MCF 10A (cell line): ENCODE measurements at regions of chr3 and their contacts with region 1.

Region 1: GRCh38 chr3:113947372-113948014 is at the start of gene ZDHHC23:
- DNase-seq: peak; percentile 73
- H3K4me3 Mint-ChIP-seq: peak within 1 kb of the TSS; percentile 79
- H3K27ac Mint-ChIP-seq: no peak within 1 kb of the TSS
- H3K4me1 Mint-ChIP-seq: peaks cover 13% of the 10 kb centered on the region
- H3K27me3 Mint-ChIP-seq: no peaks in the 10 kb centered on the region
- CTCF ChIP-seq: no peak
- total RNA-seq, gene ZDHHC23: 7.4 TPM in 2 replicates

Region 2: GRCh38 chr3:113852506-113852905 is 95.0 kb before region 1 on chr3:
- CTCF ChIA-PET with region 1: no interaction called
- POLR2A ChIA-PET with region 1: no interaction called
- intact Hi-C with region 1: no loop called
- DNase-seq: no peak
- H3K4me3 Mint-ChIP-seq: no peak overlapping the region
- H3K27ac Mint-ChIP-seq: no peak overlapping the region
- H3K4me1 Mint-ChIP-seq: no peaks in the 10 kb centered on the region
- H3K27me3 Mint-ChIP-seq: no peaks in the 10 kb centered on the region
- CTCF ChIP-seq: no peak

Region 3: DNA sequence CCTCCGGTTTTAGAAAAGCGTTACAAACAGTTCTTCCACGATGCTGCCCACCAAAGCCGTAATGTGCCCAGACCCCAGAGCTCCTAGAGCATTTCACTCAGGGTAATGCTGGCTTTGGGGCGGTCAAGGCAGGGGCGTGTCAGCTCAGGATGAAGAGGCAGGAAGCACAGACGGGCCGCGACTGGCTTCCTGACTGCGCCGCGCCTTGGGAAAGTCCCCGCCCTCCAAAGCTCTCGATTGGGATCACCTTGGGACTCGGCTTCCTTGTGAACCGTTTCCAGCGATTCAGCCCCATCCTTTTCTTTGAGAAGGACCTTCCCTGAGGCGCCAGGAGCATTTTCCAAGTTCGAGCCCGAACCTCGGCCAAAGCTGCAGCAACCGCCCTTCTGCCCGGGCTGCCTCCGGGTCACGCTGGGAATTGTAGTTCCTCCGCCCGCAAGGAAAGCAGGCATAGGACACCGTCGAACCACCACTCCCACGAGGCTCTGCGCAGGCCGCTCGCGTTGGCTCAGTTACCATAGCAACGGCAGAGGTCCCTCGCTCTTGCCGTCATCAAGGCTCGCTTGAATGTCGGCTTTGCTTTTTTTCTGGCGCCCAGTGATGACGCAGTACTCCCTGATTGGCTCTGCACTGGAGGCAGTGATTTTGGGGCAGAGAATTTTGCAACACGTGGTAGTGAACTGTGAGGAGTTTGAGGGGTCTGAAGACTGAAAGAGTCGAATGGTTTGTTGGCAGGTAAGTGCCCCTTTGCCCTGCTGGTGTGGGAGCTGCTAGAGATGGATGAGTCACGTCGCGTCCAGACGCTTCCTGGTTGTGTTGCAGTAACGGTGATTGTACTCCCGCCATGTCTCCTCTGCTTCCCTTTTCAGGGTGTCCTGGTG is 108.9 kb after region 1 on chr3 and contains the starts of genes CCDC191 and QTRT2:
- CTCF ChIA-PET with region 1: no interaction called
- POLR2A ChIA-PET with region 1: no interaction called
- intact Hi-C with region 1: loop called (anchors 1 kb)
- DNase-seq: peak; percentile 99
- H3K4me3 Mint-ChIP-seq: peak within 1 kb of the TSS; percentile 99
- H3K27ac Mint-ChIP-seq: peak within 1 kb of the TSS; percentile 99
- H3K4me1 Mint-ChIP-seq: peaks cover 34% of the 10 kb centered on the region
- H3K27me3 Mint-ChIP-seq: no peaks in the 10 kb centered on the region
- CTCF ChIP-seq: no peak
- total RNA-seq, gene CCDC191: 3.8 and 5.2 TPM in 2 replicates
- total RNA-seq, gene QTRT2: 39.2 and 43.6 TPM in 2 replicates

Region 4: GRCh38 chr3:114144909-114145647 is 197.6 kb after region 1 on chr3:
- CTCF ChIA-PET with region 1: no interaction called
- POLR2A ChIA-PET with region 1: no interaction called
- intact Hi-C with region 1: loop called (anchors 10 kb)
- DNase-seq: peak; percentile 90
- H3K4me3 Mint-ChIP-seq: no peak overlapping the region
- H3K27ac Mint-ChIP-seq: no peak overlapping the region
- H3K4me1 Mint-ChIP-seq: peaks cover 11% of the 10 kb centered on the region
- H3K27me3 Mint-ChIP-seq: no peaks in the 10 kb centered on the region
- CTCF ChIP-seq: no peak